ENCODE measurements at regions of chr3 and their contacts with region 1.

Region 1: DNA sequence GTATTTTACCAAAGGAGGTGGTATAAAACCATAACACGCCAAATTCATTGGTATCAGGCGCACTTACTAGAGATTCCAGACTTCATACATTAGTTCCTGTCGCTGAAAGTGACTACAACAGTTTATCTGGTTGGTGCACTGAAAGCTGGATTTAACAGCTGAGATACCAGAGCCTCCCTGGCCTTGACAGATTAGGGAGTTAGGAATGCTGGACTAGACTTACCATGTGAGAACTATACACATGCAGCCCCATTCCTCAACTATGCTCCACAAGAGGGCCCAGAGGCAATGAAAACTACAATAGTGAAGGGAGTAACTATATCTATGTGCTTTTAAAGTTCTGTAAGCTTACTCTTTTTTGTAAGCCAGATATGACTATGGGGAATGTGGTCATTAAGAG is 174.4 kb downstream of the STAG1 start:
- DNase-seq: no peak
- ATAC-seq: no peak
- H3K4me3 ChIP-seq: no peak overlapping the region
- H3K27ac ChIP-seq: no peak overlapping the region
- H3K4me1 ChIP-seq: no peaks in the 10 kb centered on the region; the same call in 1 of the 2 replicates
- H3K27me3 ChIP-seq: no peaks in the 10 kb centered on the region
- CTCF ChIP-seq: no peak
- POLR2A ChIP-seq: no peak
- RAD21 ChIP-seq: no peak

Region 2: GRCh38 chr3:137148917-137149316 is 571.1 kb after region 1 on chr3:
- CTCF ChIA-PET with region 1: no interaction called
- POLR2A ChIA-PET with region 1: interaction called, 21 read pairs
- dilution Hi-C with region 1: no loop called
- in situ Hi-C with region 1: no loop called
- intact Hi-C with region 1: no loop called
- DNase-seq: no peak
- ATAC-seq: no peak
- H3K4me3 ChIP-seq: no peak overlapping the region
- H3K27ac ChIP-seq: no peak overlapping the region
- H3K4me1 ChIP-seq: no peaks in the 10 kb centered on the region
- H3K27me3 ChIP-seq: no peaks in the 10 kb centered on the region
- CTCF ChIP-seq: no peak
- POLR2A ChIP-seq: no peak
- RAD21 ChIP-seq: no peak

Region 3: DNA sequence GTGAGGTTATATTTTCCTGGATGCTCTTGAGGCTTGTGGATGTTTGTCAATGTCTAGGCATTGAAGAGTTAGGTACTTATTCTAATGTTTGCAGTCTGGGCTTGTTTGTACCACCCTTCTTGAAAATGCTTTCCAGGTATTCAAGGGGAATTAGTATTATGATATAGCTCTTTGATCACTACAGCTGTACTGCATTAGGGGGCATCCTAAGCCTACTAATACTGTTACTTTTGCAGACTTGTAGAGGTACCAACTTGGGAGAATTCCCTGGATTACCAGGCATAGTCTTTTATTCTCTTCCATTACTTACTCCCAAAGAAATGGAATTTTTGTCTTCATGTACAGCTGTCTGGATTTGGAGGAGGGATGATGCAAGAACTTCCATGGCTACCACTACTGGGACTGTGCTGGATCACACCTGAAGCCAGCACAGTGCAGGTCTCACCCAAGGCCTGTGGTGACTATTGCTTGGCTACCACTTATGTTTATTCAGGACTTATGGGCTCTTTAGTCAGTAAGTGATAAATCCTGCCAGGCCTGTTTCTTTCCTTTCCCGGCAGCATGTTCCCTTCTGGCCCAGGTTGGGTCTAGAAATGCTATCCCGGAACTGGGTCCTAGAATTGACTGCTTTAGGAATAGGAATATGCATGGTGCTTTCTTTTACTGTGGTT is 782.9 kb after region 1 on chr3:
- CTCF ChIA-PET with region 1: no interaction called
- POLR2A ChIA-PET with region 1: no interaction called
- dilution Hi-C with region 1: no loop called
- in situ Hi-C with region 1: no loop called
- intact Hi-C with region 1: no loop called
- DNase-seq: no peak
- ATAC-seq: no peak
- H3K4me3 ChIP-seq: no peak overlapping the region
- H3K27ac ChIP-seq: no peak overlapping the region
- H3K4me1 ChIP-seq: no peaks in the 10 kb centered on the region
- H3K27me3 ChIP-seq: no peaks in the 10 kb centered on the region
- CTCF ChIP-seq: no peak
- POLR2A ChIP-seq: no peak
- RAD21 ChIP-seq: no peak